Posterior vena cava (tissue), 2 donors: ENCODE measurements at regions of chr16 and their contacts with region 1.

Region 1: DNA sequence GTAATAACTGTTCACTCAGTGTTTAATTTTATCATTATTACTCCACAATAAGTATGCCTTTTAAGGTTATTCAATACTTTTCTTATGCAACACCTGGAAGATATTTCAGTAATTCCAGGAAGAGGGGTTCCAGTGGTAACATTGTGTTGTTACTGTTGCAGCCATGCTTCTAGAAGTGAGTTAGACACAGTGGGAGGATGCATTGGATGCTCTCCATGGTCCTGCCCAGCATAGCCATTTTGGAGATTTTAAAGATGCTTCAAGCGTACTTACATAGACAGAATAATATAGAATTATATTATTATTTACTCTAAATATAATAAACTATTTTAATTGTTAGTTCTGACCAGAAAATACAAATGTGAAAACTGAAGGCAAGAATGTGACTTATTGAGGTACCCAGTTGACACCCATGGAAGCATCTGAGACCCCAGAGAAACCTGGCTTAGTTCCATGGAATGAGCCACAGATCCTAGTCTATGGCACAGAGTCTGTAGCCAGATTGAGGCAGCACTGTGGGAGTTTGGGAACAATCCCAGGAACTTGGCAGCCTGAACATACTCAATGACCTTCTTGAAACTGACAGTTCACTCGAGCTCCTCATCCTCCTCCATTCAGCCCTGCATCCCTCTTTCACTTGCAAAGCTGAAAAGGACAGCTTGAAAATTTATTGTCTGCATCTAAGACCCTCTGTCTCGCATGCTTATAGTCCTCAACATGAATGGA is 190.1 kb upstream of the HS3ST4 start:
- DNase-seq: no peak

Region 2: DNA sequence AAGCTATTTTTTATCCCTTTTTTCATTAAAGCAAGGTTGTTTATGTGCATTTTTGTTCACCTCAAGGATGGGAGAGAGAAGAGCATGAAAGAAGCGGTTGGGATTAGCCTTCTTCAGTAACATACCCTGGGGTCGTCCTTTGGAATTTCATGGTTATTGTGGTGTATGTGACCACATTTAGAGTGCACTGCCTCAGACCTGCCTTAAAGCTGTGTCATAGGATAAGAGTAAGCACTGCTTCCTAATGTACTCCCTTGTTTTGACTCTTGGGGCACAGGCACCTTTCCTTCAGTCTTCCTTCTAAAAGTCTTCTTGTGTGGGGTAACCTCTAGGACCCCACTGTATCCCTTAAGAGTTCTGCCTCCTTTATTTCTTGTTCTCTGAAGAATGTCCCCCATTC is 743.3 kb before region 1 on chr16:
- intact Hi-C with region 1: no loop called
- DNase-seq: no peak

Region 3: DNA sequence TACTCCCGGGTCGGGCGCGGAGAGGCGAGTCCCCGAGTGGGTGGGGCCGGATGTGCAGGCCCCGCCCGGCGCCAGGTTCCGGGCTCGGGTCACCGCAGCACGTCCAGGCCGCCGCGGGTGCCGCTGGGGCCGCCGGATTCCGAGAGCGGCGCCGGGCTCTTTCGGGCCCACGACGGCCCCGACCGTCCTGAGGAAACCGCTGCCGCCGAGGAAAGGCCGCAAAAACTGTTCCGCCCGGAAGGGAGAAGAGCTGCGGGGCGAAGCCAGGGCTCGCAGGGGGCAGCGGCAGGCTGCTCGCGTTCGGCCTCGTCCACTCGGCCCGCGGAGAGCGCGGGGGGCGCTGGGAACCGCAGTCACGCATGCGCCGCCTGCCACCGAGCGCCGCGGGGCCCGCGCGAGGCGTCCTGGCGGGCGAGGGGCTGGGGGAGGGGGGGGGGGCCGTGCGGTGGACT is 244.2 kb before region 1 on chr16 and contains the start of gene ZKSCAN2:
- intact Hi-C with region 1: no loop called
- DNase-seq: peak; percentile 97
- total RNA-seq, gene ZKSCAN2: 4.3 to 4.9 TPM

Region 4: DNA sequence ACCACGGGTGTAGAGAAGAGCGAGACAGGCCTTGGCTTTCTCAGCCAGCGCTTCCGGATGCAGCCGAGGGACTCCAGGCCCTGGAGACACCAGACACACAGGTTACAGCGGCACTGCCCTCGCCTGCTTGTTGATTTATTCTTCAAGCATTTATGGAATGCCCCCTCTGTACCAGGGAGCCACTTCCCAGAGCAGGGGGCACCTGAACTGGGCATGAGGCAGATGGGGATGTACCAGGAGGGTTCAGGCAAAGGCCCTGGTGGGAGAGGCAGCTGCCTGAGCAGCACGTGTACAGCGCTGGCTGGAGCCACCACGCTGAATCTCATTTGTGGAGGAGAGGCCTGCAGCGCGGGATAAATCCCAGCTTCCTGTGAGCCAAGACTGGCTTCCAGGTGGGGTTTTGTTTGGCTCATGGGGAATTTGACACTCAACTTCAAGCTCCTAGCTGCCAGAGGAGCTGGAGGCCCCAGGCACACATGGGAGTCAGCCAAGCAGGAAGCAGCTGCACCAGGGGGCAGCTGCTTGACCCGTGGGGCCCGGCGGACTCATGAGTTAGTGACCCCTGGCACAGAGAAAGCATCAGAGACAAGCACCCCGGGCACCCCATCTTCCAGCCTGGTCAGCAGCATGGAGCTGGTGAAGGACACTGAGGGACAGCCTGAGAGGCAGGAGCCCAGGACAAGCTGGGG is 1959.9 kb after region 1 on chr16:
- intact Hi-C with region 1: loop called in 1 of 2 experiments (anchors 5 kb)
- DNase-seq: peak; percentile 79